ENCODE measurements at regions of chr10 and their contacts with region 1.

Region 1: DNA sequence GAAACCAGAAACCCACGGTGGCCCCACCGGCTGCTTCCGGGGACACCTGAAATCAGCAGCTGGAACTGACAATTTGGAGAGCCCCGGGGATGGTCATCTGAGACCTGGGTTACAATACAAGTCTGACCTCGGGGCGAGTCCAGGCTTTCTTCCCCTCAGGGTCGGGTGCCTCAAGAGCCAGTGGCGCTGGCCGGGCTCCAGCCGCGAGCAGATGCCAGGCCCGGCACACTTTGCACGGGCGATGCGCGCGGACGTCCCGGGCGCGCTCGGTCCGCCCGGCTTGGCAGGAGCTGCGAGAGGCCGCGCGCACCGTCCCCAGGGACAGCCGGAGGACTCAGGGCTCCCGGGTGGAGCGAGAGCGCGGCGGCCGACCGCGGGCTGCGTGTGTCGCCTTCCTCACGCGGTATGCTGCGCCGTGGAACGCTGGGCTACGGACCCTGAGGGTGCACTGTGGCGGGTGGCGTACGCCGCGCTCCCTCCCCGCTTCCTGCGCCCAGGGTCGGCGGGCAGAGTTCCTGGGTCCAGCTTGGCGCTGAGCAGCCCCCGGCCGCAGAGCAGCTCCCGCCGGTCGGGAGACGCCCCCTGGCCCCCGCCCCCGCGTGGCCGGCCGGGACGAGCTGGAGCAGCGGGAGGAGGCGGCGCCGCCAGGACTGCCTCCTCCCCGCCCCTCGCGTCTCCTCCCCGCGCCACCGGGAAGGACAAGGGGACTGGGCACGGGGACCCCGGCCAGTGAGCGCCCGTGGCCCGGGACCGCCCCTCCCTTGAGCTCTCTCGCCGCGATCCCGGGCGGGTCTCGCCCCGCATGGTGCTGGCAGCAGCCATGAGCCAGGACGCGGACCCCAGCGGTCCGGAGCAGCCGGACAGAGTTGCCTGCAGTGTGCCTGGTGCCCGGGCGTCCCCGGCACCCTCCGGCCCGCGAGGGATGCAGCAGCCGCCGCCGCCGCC is at the start of gene RBM20:
- DNase-seq: no peak
- H3K4me3 ChIP-seq: peak within 1 kb of the TSS; percentile 68
- H3K27ac ChIP-seq: no peak within 1 kb of the TSS
- H3K4me1 ChIP-seq: peaks cover 55% of the 10 kb centered on the region
- CTCF ChIP-seq: no peak
- total RNA-seq, gene RBM20: 0.35 and 0.82 TPM in 2 replicates

Region 2: DNA sequence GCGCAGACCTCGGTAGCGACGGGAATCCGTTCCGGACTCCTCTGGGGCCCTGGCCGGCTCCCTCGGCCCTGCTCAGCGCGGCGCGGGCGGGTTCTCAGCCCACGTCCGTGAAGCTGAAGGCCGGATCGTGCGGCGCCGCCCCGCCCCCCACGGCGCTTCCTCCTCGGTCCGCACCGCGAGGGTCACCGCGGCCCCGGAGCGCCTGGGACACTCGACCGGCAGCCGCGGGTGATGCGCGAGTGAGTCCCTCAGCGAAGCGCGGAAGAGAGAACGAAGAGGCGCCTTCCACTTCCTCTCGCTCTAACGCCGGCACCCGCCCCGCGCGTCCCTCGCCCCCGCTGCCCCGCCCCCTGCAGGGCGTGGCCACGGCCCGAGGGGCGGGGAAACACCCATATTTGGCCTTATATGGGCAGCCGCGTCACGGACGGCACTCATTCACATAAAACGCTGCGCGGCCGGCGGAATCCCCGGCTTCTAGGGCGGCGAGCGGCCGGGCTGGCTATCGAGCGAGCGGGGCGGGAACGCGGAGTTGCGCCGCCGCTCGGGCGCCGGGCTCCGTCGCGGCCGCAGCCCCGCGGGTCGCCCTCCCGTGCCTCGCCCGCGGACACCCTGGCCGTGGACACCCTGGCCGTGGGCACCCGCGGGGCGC is 146.4 kb before region 1 on chr10 and contains the start of gene DUSP5:
- CTCF ChIA-PET with region 1: no interaction called
- POLR2A ChIA-PET with region 1: no interaction called
- intact Hi-C with region 1: no loop called
- DNase-seq: peak; percentile 96
- H3K4me3 ChIP-seq: peak within 1 kb of the TSS; percentile 70
- H3K27ac ChIP-seq: no peak within 1 kb of the TSS
- H3K4me1 ChIP-seq: peaks cover 36% of the 10 kb centered on the region
- CTCF ChIP-seq: no peak
- total RNA-seq, gene DUSP5: 0.06 and 0.08 TPM in 2 replicates

Region 3: DNA sequence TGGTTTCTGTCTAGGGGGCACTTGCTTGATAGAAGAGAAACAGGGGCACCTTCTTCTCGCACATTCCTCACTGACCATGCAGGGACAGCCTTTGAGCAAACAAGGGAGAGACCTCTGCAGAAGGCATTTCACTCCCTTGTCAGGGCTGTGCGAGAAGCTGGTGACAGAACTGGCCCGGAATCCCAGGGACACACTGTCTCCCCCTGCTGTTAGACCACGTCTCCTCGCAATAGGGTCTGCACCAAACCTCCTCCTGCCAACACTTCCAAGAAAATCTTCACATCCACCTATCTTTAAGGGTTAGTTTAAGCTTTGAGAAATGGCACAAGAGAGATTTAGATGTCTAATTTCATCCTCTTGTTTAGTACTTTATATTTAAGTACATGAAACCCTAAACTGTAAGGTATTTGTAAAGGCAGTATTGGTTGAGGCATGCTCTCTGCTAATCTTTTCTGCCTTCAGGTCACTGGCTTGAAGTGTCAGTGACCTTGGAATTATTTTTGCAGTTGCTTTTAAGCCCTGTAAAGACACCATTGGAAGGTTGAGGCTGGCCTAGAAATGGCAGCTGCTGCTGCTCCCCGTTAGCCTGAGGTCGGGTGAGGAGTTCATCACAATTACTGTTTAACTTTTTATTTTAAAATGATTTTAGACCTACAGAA is 37.2 kb after region 1 on chr10:
- CTCF ChIA-PET with region 1: no interaction called
- POLR2A ChIA-PET with region 1: interaction called, 4 read pairs
- intact Hi-C with region 1: loop called (anchors 5 kb)
- DNase-seq: peak; percentile 61
- H3K4me3 ChIP-seq: no peak overlapping the region
- H3K27ac ChIP-seq: no peak overlapping the region
- H3K4me1 ChIP-seq: peaks cover 24% of the 10 kb centered on the region
- CTCF ChIP-seq: peak; percentile 88

Region 4: DNA sequence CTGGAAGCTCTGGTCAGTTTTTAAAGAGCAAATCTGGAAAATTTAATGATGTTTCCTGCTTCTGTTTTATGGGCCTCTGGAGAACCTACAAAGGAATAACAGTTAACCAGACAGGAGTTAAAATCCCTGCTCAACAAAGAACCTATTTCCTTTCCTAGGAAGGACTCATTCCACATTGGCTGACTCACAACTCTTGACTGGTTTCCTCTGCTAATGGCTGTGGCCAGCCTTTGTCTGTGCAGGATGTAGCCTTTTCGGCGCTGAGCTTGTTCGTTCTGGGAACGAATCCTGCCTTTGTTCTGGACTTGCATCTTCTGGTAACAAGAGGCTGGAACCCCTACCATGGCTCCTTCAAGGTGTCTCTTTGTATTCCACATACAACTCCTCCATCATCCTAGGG is 115.0 kb after region 1 on chr10:
- CTCF ChIA-PET with region 1: no interaction called
- POLR2A ChIA-PET with region 1: no interaction called
- intact Hi-C with region 1: no loop called
- DNase-seq: no peak
- H3K4me3 ChIP-seq: no peak overlapping the region
- H3K27ac ChIP-seq: no peak overlapping the region
- H3K4me1 ChIP-seq: no peaks in the 10 kb centered on the region
- CTCF ChIP-seq: no peak